Caco-2 (cell line): ENCODE measurements at regions of chr6 and their contacts with region 1.

Region 1: DNA sequence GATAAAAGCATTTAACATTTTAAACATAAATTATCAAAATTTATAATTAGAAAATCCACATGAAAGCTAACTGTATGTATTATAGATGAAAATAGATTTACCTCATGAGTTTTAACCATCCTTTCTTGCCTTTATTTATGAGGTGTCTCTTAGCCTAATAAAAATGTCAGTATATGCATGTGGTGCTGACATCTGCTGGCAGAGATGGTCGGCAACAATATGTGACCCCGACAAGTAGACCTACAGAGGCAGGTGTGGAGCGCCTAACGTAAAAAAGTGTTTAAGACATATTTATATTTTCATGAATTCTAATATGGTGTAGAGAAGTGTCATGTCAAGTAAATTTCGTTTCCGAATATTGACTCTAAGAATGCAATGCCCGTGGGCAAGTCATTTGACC is 149.0 kb upstream of the FUT9 start:
- DNase-seq: peak; percentile 39 to 43
- H3K4me3 ChIP-seq: no peak overlapping the region
- H3K4me3 Mint-ChIP-seq: no peak overlapping the region
- H3K27ac Mint-ChIP-seq: no peak overlapping the region
- H3K4me1 ChIP-seq: no peaks in the 10 kb centered on the region
- H3K4me1 Mint-ChIP-seq: peaks cover 7% of the 10 kb centered on the region
- H3K27me3 ChIP-seq: no peaks in the 10 kb centered on the region
- H3K27me3 Mint-ChIP-seq: no peaks in the 10 kb centered on the region
- CTCF ChIP-seq: peak; percentile 50 to 54

Region 2: DNA sequence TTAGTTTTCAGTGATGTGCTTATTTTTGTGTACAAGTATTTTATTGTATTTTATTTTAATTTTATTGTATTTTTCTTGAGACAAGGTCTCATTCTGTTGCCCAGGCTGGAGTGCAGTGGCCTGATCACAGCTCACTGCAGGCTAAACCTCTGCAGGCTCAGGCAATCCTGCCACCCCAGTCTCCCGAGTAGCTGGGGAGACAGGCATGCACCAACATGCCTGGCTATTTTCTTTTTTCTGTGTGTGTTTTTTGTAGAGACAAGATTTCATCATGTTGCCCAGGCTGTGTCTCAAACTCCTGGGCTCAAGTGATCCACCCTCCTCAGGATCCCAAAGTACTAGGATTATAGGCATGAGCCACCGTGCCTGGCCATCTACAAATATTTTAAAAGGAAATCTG is 143.1 kb before region 1 on chr6:
- CTCF ChIA-PET with region 1: no interaction called
- POLR2A ChIA-PET with region 1: no interaction called
- intact Hi-C with region 1: no loop called
- DNase-seq: no peak
- H3K4me3 ChIP-seq: no peak overlapping the region
- H3K4me3 Mint-ChIP-seq: no peak overlapping the region
- H3K27ac Mint-ChIP-seq: no peak overlapping the region
- H3K4me1 ChIP-seq: no peaks in the 10 kb centered on the region
- H3K4me1 Mint-ChIP-seq: no peaks in the 10 kb centered on the region
- H3K27me3 ChIP-seq: no peaks in the 10 kb centered on the region
- H3K27me3 Mint-ChIP-seq: no peaks in the 10 kb centered on the region
- CTCF ChIP-seq: no peak

Region 3: DNA sequence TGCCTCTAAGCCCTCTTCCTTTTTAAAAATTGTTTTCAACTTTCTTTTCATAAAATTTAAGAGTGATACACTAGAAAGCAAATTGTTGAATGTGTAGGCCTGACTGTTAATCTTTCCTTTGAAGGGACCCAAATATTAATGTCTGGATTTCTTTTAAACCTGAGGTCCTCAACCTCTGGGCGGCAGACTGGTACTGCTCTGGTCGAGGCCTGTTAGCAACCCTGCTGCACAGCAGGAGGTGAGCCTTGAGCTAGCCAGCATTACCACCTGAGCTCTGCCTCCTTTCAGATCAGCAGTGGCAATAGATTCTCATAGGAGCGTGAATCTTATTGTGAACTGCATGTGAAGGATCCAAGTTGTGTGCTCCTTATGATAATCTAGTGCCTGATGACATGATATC is 98.2 kb before region 1 on chr6:
- CTCF ChIA-PET with region 1: no interaction called
- POLR2A ChIA-PET with region 1: no interaction called
- intact Hi-C with region 1: loop called (anchors 1 kb)
- DNase-seq: peak; percentile 23 to 37
- H3K4me3 ChIP-seq: no peak overlapping the region
- H3K4me3 Mint-ChIP-seq: no peak overlapping the region
- H3K27ac Mint-ChIP-seq: peak overlapping the region; percentile 13
- H3K4me1 ChIP-seq: peaks cover 15% of the 10 kb centered on the region; the same call in 1 of the 2 replicates
- H3K4me1 Mint-ChIP-seq: peaks cover 26% of the 10 kb centered on the region
- H3K27me3 ChIP-seq: no peaks in the 10 kb centered on the region
- H3K27me3 Mint-ChIP-seq: no peaks in the 10 kb centered on the region
- CTCF ChIP-seq: no peak